Naive thymus-derived CD4-positive, alpha-beta T cell (primary cell): ENCODE measurements at regions of chr5 and their contacts with region 1.

Region 1: DNA sequence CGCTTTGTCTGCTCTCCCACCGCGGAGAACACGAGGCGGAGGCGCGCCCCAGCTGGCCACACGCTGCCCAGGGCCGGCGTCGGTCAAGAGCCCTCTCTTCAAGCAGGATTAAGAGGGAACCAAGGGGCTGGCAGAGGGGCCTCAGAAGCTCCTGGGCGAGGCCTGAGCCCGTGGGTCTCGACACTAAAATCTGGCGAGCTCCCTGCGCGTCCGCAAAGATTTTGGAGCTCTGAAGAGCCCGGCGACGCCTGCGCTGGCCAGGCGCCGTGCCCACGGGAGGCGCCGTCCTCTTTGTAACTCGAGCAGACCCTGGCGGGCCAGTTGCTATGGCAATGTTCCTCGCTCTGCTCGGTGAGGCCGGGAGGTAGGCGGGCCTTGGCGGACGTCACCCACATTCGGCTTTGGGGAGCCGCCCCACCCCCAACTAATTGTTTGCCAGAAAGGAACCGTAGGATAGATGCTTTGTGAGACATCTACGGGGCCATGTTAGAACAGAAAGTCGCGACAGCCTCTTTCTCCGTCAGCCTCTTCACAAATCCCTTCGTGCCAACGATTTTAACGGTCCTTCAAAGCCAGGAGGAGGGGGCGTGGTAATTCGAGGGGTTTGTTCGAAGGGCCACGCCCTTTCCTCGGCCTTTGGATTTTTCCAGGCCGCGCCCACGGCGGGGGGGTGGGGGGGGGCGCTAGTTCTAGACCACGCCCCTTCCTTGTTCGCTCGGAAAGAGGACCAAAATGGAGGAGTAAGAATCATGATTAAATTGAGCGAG is 714 bp upstream of the CNOT8 start:
- DNase-seq: peak; percentile 73 to 94 (median 88)
- ATAC-seq: peak; percentile 71
- H3K4me3 ChIP-seq: peak overlapping the region; percentile 74
- H3K4me3 Mint-ChIP-seq: peak overlapping the region; percentile 85 to 98 (median 95)
- H3K27ac ChIP-seq: peak overlapping the region; percentile 97
- H3K27ac Mint-ChIP-seq: peak overlapping the region; percentile 95 to 100 (median 98)
- H3K4me1 ChIP-seq: peaks cover 25 to 30% of the 10 kb centered on the region in 2 donors
- H3K4me1 Mint-ChIP-seq: peaks cover 33 to 40% (median 38%) of the 10 kb centered on the region in 7 donors
- H3K27me3 ChIP-seq: no peaks in the 10 kb centered on the region
- H3K27me3 Mint-ChIP-seq: no peaks in the 10 kb centered on the region

Region 2: GRCh38 chr5:154038707-154039457 is 818.8 kb before region 1 on chr5 and contains the starts of genes FAM114A2 and MFAP3:
- CTCF ChIA-PET with region 1: no interaction called
- POLR2A ChIA-PET with region 1: no interaction called
- intact Hi-C with region 1: loop called (anchors 1 kb)
- DNase-seq: peak; percentile 74 to 87 (median 84)
- ATAC-seq: peak; percentile 98
- H3K4me3 ChIP-seq: peak within 1 kb of the TSS; percentile 93
- H3K4me3 Mint-ChIP-seq: peak within 1 kb of the TSS; percentile 91 to 99 (median 98)
- H3K27ac ChIP-seq: peak within 1 kb of the TSS; percentile 80
- H3K27ac Mint-ChIP-seq: peak within 1 kb of the TSS; percentile 96 to 99 (median 97)
- H3K4me1 ChIP-seq: peaks cover 11 to 21% of the 10 kb centered on the region in 2 donors
- H3K4me1 Mint-ChIP-seq: peaks cover 37 to 78% (median 76%) of the 10 kb centered on the region in 7 donors
- H3K27me3 ChIP-seq: no peaks in the 10 kb centered on the region
- H3K27me3 Mint-ChIP-seq: no peaks in the 10 kb centered on the region
- total RNA-seq, gene FAM114A2: 26.2 to 53.1 (median 37.1) TPM
- total RNA-seq, gene MFAP3: 11.1 to 30.6 (median 28.1) TPM

Region 3: DNA sequence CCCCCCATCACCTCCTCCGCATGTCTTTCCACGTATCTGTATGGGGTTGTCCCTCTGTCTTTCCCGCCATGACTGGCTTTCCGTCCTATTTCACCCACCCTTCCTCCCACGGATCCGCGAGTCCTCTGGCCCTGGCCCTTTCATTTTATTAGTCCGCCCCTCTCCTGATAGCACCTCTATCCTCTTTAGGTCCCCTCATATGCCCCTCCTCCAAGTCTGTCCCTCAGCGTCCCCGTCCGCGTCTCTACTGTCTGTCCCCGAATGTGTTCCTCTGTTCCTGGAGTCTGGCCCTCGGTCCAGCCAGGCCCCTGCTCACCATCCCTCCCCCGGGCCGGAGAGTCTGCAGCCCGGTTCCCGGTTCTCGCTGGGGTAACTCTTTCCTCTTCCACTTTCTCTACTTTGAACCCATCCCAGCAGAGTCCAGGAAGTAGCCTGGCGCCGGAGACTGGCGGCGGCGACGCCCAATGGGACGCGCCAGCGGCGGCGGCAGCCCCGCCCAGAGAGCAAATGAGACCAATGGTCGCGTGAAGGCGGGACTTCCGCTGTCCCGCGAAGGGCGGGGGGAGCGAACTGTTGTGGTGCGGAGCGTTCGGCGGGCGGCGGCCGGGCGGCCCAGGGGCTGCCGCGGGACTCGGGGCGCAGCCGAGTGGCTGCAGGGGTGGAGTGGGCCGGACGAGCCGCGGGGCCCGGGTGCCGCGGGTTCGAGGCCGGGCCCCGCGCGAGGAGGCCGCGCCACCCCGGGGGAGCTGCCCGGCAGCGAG is 412.1 kb before region 1 on chr5 and contains the start of gene SAP30L:
- CTCF ChIA-PET with region 1: no interaction called
- POLR2A ChIA-PET with region 1: no interaction called
- intact Hi-C with region 1: loop called (anchors 1 kb)
- DNase-seq: peak; percentile 92 to 99 (median 97)
- ATAC-seq: peak; percentile 97
- H3K4me3 ChIP-seq: peak within 1 kb of the TSS; percentile 90
- H3K4me3 Mint-ChIP-seq: peak within 1 kb of the TSS; percentile 94 to 100 (median 99)
- H3K27ac ChIP-seq: peak within 1 kb of the TSS; percentile 83
- H3K27ac Mint-ChIP-seq: peak within 1 kb of the TSS; percentile 88 to 98 (median 95)
- H3K4me1 ChIP-seq: peaks cover 16 to 35% of the 10 kb centered on the region in 2 donors
- H3K4me1 Mint-ChIP-seq: peaks cover 32 to 74% (median 61%) of the 10 kb centered on the region in 7 donors
- H3K27me3 ChIP-seq: no peaks in the 10 kb centered on the region
- H3K27me3 Mint-ChIP-seq: no peaks in the 10 kb centered on the region
- total RNA-seq, gene SAP30L: 31.1 to 45.7 (median 35.9) TPM

Region 4: DNA sequence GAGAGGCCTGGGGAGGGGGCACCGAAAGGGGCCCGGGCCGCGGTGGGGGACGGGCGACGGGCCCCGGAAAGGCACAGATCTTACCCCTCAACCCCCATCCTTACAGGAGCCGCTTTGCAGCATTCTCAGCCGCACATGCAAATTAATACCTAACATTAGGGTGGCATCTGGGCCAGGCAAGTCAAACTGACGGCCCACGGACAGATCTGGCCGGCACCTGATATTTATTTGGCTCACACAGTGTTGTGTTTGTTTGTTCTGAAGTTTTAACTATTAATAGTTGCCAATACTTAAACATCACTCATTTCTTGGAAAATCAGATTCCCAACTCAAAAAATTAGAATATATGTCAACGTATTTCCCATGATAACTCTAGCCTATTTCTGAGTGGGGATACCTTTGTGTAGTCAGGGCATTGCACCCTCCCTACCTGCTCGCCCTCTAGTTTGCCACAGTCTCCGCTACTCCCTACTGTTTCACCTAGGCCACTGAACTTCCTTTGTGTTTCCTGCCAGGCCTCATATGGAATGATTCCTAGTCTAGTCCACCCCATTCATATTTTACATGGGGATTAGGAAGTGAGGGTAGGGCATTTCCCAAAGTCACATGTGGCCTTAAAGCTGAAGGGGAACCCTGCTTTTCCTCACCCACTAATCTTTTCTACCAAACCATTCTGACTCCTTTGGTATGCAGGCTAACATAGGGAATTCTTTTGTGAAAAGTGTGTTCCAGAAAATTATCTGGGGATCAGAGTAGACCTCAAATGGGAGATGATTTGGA is 174.4 kb before region 1 on chr5:
- CTCF ChIA-PET with region 1: no interaction called
- POLR2A ChIA-PET with region 1: interaction called, 3 read pairs
- intact Hi-C with region 1: loop called (anchors 1 to 5 kb)
- DNase-seq: no peak
- ATAC-seq: peak; percentile 26
- H3K4me3 ChIP-seq: peak overlapping the region; percentile 48
- H3K4me3 Mint-ChIP-seq: peak overlapping the region; percentile 32 to 82 (median 76)
- H3K27ac ChIP-seq: no peak overlapping the region
- H3K27ac Mint-ChIP-seq: peak overlapping the region in 2 of 9 donors; percentile 17 to 53
- H3K4me1 ChIP-seq: peaks cover 0 to 3% of the 10 kb centered on the region in 2 donors
- H3K4me1 Mint-ChIP-seq: peaks cover 0 to 9% (median 6%) of the 10 kb centered on the region in 7 donors
- H3K27me3 ChIP-seq: peaks cover 0 to 2% of the 10 kb centered on the region in 2 donors
- H3K27me3 Mint-ChIP-seq: peaks cover 0 to 34% (median 3%) of the 10 kb centered on the region in 5 donors

Region 5: GRCh38 chr5:154811653-154812365 is 45.9 kb before region 1 on chr5:
- CTCF ChIA-PET with region 1: no interaction called
- POLR2A ChIA-PET with region 1: interaction called, 3 read pairs
- intact Hi-C with region 1: loop called (anchors 1 kb)
- DNase-seq: peak; percentile 30 to 68 (median 58)
- ATAC-seq: peak; percentile 88
- H3K4me3 ChIP-seq: no peak overlapping the region
- H3K4me3 Mint-ChIP-seq: peak overlapping the region in 4 of 10 donors; percentile 10 to 47 (median 23)
- H3K27ac ChIP-seq: no peak overlapping the region
- H3K27ac Mint-ChIP-seq: peak overlapping the region; percentile 1 to 82 (median 55)
- H3K4me1 ChIP-seq: peaks cover 15 to 18% of the 10 kb centered on the region in 2 donors
- H3K4me1 Mint-ChIP-seq: peaks cover 21 to 46% (median 36%) of the 10 kb centered on the region in 7 donors
- H3K27me3 ChIP-seq: no peaks in the 10 kb centered on the region
- H3K27me3 Mint-ChIP-seq: no peaks in the 10 kb centered on the region

Region 6: DNA sequence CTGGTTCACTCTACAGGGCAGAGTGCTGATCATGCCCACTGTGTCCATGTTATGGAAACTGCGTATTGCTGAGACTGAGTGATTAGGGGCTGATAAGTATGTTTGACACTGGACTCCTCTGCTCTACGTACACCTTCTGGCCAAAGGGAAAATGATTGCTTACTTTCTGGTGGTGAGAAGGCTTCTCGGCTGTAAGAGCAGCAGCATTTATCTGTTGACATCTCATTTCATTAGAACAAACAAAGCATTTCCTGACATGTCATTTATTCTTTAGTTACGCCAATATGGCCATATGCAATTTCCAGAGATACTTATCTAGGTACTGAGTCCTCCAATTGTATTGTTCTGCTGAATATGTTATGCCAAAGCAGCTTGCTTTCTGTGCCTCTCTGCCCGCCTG is 12.9 kb before region 1 on chr5:
- CTCF ChIA-PET with region 1: no interaction called
- POLR2A ChIA-PET with region 1: interaction called, 11 read pairs
- intact Hi-C with region 1: no loop called
- DNase-seq: no peak
- ATAC-seq: no peak
- H3K4me3 ChIP-seq: no peak overlapping the region
- H3K4me3 Mint-ChIP-seq: no peak overlapping the region
- H3K27ac ChIP-seq: no peak overlapping the region
- H3K27ac Mint-ChIP-seq: no peak overlapping the region
- H3K4me1 ChIP-seq: no peaks in the 10 kb centered on the region
- H3K4me1 Mint-ChIP-seq: peaks cover 0 to 10% (median under 1%) of the 10 kb centered on the region in 7 donors
- H3K27me3 ChIP-seq: no peaks in the 10 kb centered on the region
- H3K27me3 Mint-ChIP-seq: no peaks in the 10 kb centered on the region

Region 7: DNA sequence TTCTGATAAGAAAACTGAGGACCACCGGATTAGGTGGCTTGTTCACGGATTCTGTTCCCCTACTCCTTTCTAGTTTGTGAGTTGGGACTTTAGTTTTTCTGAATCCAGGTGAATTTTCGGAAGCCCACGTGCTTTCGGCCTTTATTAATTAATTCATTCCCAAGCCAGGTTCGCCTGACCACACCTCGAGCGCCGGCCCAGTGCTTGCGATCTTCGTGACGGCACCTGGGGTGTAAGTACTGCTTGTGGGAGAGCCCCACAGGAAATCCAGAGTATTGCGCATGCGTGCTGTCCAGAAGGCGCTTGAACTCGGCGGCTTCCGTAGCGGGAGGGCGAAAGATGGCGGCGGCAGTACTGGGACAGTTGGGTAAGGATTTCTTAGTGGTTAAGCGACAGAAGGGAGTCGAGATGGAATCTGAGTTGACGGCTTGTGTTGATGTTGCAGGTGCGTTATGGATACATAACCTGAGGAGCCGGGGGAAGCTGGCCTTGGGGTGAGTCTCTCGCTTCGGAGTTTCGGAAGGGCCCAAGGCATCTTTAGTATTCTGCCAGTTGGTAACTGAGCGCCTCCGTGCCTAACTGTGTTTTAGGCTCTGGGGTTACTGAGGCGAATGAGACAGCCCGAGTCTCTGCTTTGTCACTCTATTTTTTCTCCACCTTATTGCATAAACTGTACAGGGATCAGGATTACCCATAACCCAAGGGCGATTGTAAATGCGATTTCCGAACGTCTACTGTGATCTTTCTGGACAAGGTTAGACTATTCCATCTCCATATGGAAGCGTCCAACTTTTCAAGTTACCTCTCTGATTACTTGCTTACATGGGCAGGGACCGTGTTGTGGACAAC is 83.3 kb after region 1 on chr5 and contains the start of gene MRPL22:
- CTCF ChIA-PET with region 1: no interaction called
- POLR2A ChIA-PET with region 1: interaction called, 3 read pairs
- intact Hi-C with region 1: loop called (anchors 1 kb)
- DNase-seq: peak; percentile 85 to 99 (median 94)
- ATAC-seq: peak; percentile 84
- H3K4me3 ChIP-seq: peak within 1 kb of the TSS; percentile 76
- H3K4me3 Mint-ChIP-seq: peak within 1 kb of the TSS; percentile 89 to 100 (median 96)
- H3K27ac ChIP-seq: peak within 1 kb of the TSS; percentile 94
- H3K27ac Mint-ChIP-seq: peak within 1 kb of the TSS; percentile 93 to 98 (median 96)
- H3K4me1 ChIP-seq: peaks cover 22 to 25% of the 10 kb centered on the region in 2 donors
- H3K4me1 Mint-ChIP-seq: peaks cover 23 to 62% (median 47%) of the 10 kb centered on the region in 7 donors
- H3K27me3 ChIP-seq: no peaks in the 10 kb centered on the region
- H3K27me3 Mint-ChIP-seq: no peaks in the 10 kb centered on the region
- total RNA-seq, gene MRPL22: 18.4 to 62.0 (median 24.9) TPM